Activated T-helper 1 cell treated with anti-CD3 and anti-CD28 coated beads, Interleukin-12 subunit alpha, Interleukin-12 subunit beta, Interleukin-2, Interleukin-4 antibody, amounts not matched to agents 30 ng/mL and 10 ng/mL and 1 ng/mL, durations not matched to agents 14 hours and 24 hours and 36 hours (primary cell): ENCODE measurements at regions of chr14 and their contacts with region 1.

Region 1: GRCh38 chr14:100645192-100645990 is 58.2 kb upstream of the BEGAIN start:
- DNase-seq: peak; percentile 80
- H3K4me3 Mint-ChIP-seq: peak overlapping the region; percentile 13
- H3K27ac Mint-ChIP-seq: no peak overlapping the region
- H3K4me1 Mint-ChIP-seq: peaks cover 45% of the 10 kb centered on the region
- H3K27me3 Mint-ChIP-seq: peaks cover 40% of the 10 kb centered on the region

Region 2: DNA sequence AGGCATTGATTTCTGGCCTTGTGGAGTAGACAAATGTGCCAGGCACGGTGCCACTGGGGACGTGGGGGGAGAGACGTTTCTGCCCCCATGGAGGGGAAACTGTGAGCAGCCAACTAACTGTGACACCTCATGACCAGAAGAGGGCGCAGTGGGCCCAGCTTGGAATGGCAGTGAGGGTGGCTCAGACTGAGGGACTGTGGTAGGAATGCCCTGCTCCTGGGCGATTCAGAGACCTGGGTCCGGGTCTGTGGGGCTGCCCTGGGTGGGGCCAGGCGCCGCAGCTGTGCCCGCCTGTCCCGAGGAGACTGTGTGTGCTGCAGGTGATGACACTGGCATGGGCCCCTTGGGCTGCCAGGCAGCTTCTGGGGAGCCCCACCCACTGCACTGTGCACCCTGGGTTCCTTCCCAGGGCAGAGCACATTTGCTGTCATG is 261.6 kb before region 1 on chr14:
- intact Hi-C with region 1: loop called (anchors 1 kb)
- DNase-seq: peak; percentile 53
- H3K4me3 Mint-ChIP-seq: no peak overlapping the region
- H3K27ac Mint-ChIP-seq: no peak overlapping the region
- H3K4me1 Mint-ChIP-seq: peaks cover 23% of the 10 kb centered on the region
- H3K27me3 Mint-ChIP-seq: no peaks in the 10 kb centered on the region

Region 3: GRCh38 chr14:100440187-100440631 is 205.2 kb before region 1 on chr14:
- intact Hi-C with region 1: loop called (anchors 1 kb)
- DNase-seq: no peak
- H3K4me3 Mint-ChIP-seq: no peak overlapping the region
- H3K27ac Mint-ChIP-seq: no peak overlapping the region
- H3K4me1 Mint-ChIP-seq: peaks cover 35% of the 10 kb centered on the region
- H3K27me3 Mint-ChIP-seq: no peaks in the 10 kb centered on the region

Region 4: DNA sequence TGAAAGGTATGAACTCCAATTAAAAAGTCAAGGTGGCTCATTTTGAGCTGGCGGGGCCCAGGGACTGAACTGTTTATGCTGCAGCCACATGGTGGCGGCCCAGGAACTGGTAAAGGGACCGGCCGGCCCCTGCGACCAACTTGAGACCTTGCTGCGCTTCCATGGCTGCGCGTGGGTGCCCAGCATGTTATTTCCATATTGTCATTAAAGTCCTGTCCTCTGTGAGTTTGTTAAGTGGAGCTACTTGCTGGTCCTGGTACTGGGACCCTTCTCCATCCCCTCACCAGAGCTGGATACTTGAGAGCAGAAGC is 120.5 kb before region 1 on chr14:
- intact Hi-C with region 1: loop called (anchors 1 kb)
- DNase-seq: no peak
- H3K4me3 Mint-ChIP-seq: no peak overlapping the region
- H3K27ac Mint-ChIP-seq: no peak overlapping the region
- H3K4me1 Mint-ChIP-seq: no peaks in the 10 kb centered on the region
- H3K27me3 Mint-ChIP-seq: no peaks in the 10 kb centered on the region

Region 5: DNA sequence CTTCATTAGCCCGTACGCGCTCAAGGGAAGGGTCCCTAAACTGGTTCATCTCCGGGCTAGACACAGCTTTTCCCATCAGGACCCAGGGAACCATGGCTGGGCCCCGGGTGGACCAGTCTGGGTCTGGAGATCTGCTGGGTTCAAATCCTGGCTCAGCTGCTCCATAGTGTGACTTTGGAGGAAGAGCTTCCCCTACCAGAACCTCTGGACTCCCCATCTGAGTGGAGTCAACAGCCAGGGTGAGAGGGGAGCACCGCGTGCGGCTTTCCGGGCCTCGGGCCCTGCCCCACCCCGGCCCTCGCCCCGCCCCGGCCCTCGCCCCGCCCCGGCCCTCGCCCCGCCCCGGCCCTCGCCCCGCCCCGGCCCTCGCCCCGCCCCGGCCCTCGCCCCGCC is 99.3 kb before region 1 on chr14:
- intact Hi-C with region 1: loop called (anchors 1 kb)
- DNase-seq: no peak
- H3K4me3 Mint-ChIP-seq: no peak overlapping the region
- H3K27ac Mint-ChIP-seq: no peak overlapping the region
- H3K4me1 Mint-ChIP-seq: peaks cover 6% of the 10 kb centered on the region
- H3K27me3 Mint-ChIP-seq: peaks cover 2% of the 10 kb centered on the region

Region 6: GRCh38 chr14:100586403-100587085 is 58.8 kb before region 1 on chr14:
- intact Hi-C with region 1: loop called (anchors 1 kb)
- DNase-seq: no peak
- H3K4me3 Mint-ChIP-seq: peak overlapping the region; percentile 65
- H3K27ac Mint-ChIP-seq: no peak overlapping the region
- H3K4me1 Mint-ChIP-seq: no peaks in the 10 kb centered on the region
- H3K27me3 Mint-ChIP-seq: peaks cover 23% of the 10 kb centered on the region

Region 7: GRCh38 chr14:100703386-100704257 is 58.2 kb after region 1 on chr14:
- intact Hi-C with region 1: no loop called
- DNase-seq: no peak
- H3K4me3 Mint-ChIP-seq: no peak overlapping the region
- H3K27ac Mint-ChIP-seq: no peak overlapping the region
- H3K4me1 Mint-ChIP-seq: no peaks in the 10 kb centered on the region
- H3K27me3 Mint-ChIP-seq: no peaks in the 10 kb centered on the region

Region 8: GRCh38 chr14:101475456-101476257 is 830.3 kb after region 1 on chr14:
- intact Hi-C with region 1: no loop called
- DNase-seq: no peak
- H3K4me3 Mint-ChIP-seq: no peak overlapping the region
- H3K27ac Mint-ChIP-seq: no peak overlapping the region
- H3K4me1 Mint-ChIP-seq: no peaks in the 10 kb centered on the region
- H3K27me3 Mint-ChIP-seq: no peaks in the 10 kb centered on the region